PC-3 (cell line): ENCODE measurements at regions of chr6 and their contacts with region 1.

Region 1: GRCh38 chr6:42043787-42044475 is 6.4 kb upstream of the TAF8 start:
- DNase-seq: peak; percentile 92
- ATAC-seq: peak; percentile 65
- H3K4me3 ChIP-seq: no peak overlapping the region
- H3K27ac ChIP-seq: no peak overlapping the region
- H3K4me1 ChIP-seq: peaks cover 27% of the 10 kb centered on the region
- H3K27me3 ChIP-seq: no peaks in the 10 kb centered on the region
- CTCF ChIP-seq: peak; percentile 97

Region 2: DNA sequence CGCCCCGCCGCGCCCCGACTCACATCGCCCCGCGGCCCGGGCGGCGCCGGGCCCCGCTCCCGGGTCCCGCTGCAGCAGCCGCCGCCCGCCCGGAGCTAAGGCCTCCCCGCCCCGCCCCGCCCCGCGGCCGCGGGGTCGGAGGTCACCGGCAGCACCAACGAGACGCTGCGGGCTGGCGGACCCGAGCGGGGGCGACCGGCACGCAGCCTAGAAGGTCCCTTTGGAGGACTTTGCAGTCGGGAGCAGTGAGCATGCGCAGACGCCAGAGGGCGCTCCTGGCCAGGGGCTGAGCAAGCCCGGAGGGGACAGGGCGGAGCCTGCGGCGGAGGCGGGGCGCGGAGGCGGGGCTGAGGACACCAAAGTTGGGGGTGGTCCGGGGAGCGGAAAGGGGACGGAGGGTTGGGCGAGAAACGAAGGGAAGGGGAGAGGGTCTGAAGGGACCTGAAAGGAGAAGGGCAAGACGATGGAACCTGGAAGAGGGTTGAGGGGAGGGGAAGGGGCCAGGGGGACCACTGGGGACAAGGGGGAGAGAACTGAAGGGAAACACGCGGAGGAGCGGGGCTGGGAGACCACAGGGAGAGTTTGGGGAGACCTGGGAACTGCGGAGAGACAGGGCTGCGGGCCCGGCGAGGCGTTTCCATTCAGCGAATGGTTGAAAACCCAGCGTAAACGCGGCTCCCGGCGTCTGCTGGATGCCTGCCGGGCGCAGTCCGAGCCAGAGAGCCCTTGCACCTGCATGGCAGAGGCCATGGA is 264.0 kb before region 1 on chr6 and contains the start of gene FRS3:
- CTCF ChIA-PET with region 1: no interaction called
- POLR2A ChIA-PET with region 1: no interaction called
- intact Hi-C with region 1: loop called (anchors 1 kb)
- DNase-seq: peak; percentile 98
- ATAC-seq: peak; percentile 82
- H3K4me3 ChIP-seq: peak within 1 kb of the TSS; percentile 93
- H3K27ac ChIP-seq: no peak within 1 kb of the TSS
- H3K4me1 ChIP-seq: peaks cover 15% of the 10 kb centered on the region
- H3K27me3 ChIP-seq: no peaks in the 10 kb centered on the region
- CTCF ChIP-seq: peak; percentile 88
- total RNA-seq, gene FRS3: 3.9 and 4.3 TPM in 2 replicates

Region 3: GRCh38 chr6:41846666-41847237 is 197.2 kb before region 1 on chr6:
- CTCF ChIA-PET with region 1: interaction called, 3 read pairs
- POLR2A ChIA-PET with region 1: no interaction called
- intact Hi-C with region 1: loop called (anchors 1 kb)
- DNase-seq: peak; percentile 98
- ATAC-seq: peak; percentile 99
- H3K4me3 ChIP-seq: peak overlapping the region; percentile 13; the same call in 1 of the 2 replicates
- H3K27ac ChIP-seq: peak overlapping the region; percentile 39
- H3K4me1 ChIP-seq: peaks cover 9% of the 10 kb centered on the region
- H3K27me3 ChIP-seq: no peaks in the 10 kb centered on the region
- CTCF ChIP-seq: peak; percentile 89

Region 4: DNA sequence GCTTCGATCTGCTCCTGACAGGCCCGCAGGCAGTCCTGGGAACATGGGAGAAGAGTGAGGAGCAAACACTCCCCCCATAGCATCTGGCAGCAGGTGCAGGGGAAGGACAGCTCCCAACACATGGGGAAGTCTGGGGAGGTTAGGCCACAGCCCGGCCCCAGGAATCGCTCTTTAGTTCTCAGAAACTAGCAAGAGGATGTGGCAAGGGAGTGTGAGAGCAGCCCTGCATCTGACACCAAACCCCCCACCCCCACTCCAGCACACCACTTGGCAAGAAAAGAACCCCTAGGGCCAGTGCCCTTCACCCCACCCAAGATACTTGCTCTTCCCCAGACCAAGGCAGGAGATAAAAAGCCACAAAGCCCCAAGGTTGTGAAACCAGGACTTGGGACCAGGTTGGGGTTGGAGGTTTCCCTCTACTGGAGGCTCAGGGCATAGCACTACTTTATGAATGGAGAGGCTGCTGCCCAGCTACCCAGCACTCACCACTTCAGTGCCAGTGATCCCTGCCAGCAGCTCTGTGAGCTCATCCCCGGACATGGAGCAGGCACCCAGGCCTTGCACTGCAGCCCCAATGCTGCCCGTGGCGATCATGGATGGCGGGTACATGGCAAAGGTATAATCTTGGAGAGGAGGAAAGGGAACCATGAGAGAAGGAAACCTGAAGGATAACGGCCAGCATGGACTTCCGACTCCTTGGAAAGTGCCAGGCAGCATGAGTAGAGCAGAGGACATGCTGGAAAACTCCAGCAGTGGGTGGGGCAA is 107.7 kb before region 1 on chr6:
- CTCF ChIA-PET with region 1: interaction called, 9 read pairs
- POLR2A ChIA-PET with region 1: no interaction called
- intact Hi-C with region 1: loop called (anchors 2 kb)
- DNase-seq: peak; percentile 91
- ATAC-seq: peak; percentile 74
- H3K4me3 ChIP-seq: no peak overlapping the region
- H3K27ac ChIP-seq: no peak overlapping the region
- H3K4me1 ChIP-seq: peaks cover 26% of the 10 kb centered on the region
- H3K27me3 ChIP-seq: no peaks in the 10 kb centered on the region
- CTCF ChIP-seq: peak; percentile 87

Region 5: GRCh38 chr6:42017021-42017643 is 26.8 kb before region 1 on chr6:
- CTCF ChIA-PET with region 1: no interaction called
- POLR2A ChIA-PET with region 1: no interaction called
- intact Hi-C with region 1: no loop called
- DNase-seq: peak; percentile 69
- ATAC-seq: peak; percentile 85
- H3K4me3 ChIP-seq: no peak overlapping the region
- H3K27ac ChIP-seq: no peak overlapping the region
- H3K4me1 ChIP-seq: peaks cover 9% of the 10 kb centered on the region; the same call in 1 of the 2 replicates
- H3K27me3 ChIP-seq: no peaks in the 10 kb centered on the region
- CTCF ChIP-seq: no peak

Region 6: DNA sequence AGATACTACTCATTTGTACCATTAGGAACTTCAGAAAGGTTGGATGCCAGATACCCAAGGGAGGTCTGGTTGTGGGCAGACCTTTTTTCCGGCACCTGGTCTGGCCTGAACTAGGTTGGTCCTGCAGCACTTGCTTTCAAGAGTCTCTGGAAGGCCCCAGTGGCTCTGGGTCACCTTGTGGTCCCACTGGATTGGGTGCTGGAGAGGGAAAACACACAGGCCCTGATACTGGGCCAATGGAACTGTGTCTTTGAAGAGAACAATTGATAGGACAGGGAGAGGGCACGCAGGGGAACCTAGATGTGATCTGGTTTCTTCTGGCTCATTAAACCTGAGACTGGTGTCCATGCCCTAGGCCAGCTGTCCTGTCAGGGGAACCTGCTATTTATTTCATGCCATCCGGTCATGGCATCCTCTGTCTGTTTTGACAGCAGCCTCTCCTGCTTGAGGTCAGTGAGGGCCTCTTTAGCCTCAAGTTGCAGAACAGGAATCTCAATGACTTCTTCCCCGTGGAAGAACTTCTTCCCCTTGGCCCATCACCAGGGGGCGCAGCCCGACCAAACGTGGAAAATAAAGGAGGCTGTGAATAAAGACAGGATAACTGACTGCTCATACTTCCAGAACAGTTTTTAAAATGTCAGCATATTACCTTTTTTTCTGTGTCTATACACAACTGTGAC is 31.4 kb after region 1 on chr6:
- CTCF ChIA-PET with region 1: no interaction called
- POLR2A ChIA-PET with region 1: no interaction called
- intact Hi-C with region 1: no loop called
- DNase-seq: peak; percentile 93
- ATAC-seq: peak; percentile 88
- H3K4me3 ChIP-seq: no peak overlapping the region
- H3K27ac ChIP-seq: no peak overlapping the region
- H3K4me1 ChIP-seq: peaks cover 4% of the 10 kb centered on the region; the same call in 1 of the 2 replicates
- H3K27me3 ChIP-seq: no peaks in the 10 kb centered on the region
- CTCF ChIP-seq: peak; percentile 95

Region 7: DNA sequence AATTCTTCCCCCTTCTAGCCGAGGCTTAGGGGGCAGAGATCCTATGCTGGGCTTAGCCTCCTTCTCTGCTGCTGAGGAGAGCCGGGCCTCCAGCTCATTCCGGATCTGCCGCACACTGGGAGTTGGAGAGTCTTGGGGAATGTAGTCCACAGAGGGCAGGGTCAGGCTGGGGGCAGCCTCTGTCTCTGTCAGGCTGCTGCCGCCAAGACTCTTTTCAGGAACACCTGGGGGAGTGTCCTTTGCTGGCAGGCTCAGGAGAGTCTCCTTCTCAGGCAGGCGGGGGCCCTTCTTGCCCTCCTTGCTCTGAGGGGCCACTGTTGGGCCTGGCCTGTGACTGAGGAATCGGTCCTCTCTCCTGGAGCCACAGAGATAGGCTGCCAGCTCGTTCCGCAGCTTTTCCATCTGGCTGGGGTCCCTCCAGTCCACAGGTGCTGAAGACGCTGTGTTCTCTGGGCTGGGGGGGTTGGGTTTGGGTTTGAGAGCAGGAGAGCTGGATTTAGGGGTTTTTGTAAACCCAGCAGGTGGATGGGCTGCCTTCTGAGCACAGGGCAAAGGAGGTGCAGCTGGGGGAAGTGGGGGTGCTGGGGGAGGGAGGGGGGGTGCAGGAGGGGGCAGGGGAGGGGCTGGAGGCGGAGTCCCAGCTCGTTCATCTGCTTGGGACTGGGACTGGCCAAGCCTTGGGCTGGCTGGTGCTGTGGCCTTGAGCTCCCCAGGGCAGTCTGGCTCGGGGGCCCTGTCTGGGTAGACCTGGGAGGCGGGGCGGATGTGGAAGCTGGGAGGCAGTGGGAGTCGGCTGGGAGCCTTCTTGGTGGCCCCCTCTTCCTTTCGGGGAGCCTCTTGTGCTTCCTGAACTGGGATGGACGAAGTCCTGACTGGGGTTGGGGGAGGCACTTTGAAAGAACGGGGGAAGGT is 62.4 kb after region 1 on chr6:
- CTCF ChIA-PET with region 1: no interaction called
- POLR2A ChIA-PET with region 1: no interaction called
- intact Hi-C with region 1: no loop called
- DNase-seq: no peak
- ATAC-seq: no peak
- H3K4me3 ChIP-seq: no peak overlapping the region
- H3K27ac ChIP-seq: no peak overlapping the region
- H3K4me1 ChIP-seq: peaks cover 8% of the 10 kb centered on the region
- H3K27me3 ChIP-seq: no peaks in the 10 kb centered on the region
- CTCF ChIP-seq: no peak